GM12878 (cell line): ENCODE measurements at regions of chr9 and their contacts with region 1.

Region 1: GRCh38 chr9:34869390-34869789 is 88.7 kb upstream of the PHF24 start:
- DNase-seq: no peak
- ATAC-seq: no peak
- H3K4me3 ChIP-seq: no peak overlapping the region
- H3K27ac ChIP-seq: no peak overlapping the region
- H3K4me1 ChIP-seq: no peaks in the 10 kb centered on the region
- H3K27me3 ChIP-seq: no peaks in the 10 kb centered on the region
- CTCF ChIP-seq: peak; percentile 12 to 21 (median 15); a peak in 3 of 6 replicates
- EP300 ChIP-seq: no peak
- POLR2A ChIP-seq: no peak
- RAD21 ChIP-seq: 0 out of 2 replicates have a peak, but pooled peaks have one; percentile 22

Region 2: GRCh38 chr9:34479431-34479866 is 389.9 kb before region 1 on chr9:
- CTCF ChIA-PET with region 1: no interaction called
- POLR2A ChIA-PET with region 1: no interaction called
- RAD21 ChIA-PET with region 1: no interaction called
- SMC1A ChIA-PET with region 1: no interaction called
- in situ Hi-C with region 1: no loop called
- intact Hi-C with region 1: no loop called
- DNase-seq: no peak
- ATAC-seq: no peak
- H3K4me3 ChIP-seq: no peak overlapping the region
- H3K27ac ChIP-seq: no peak overlapping the region
- H3K4me1 ChIP-seq: no peaks in the 10 kb centered on the region
- H3K27me3 ChIP-seq: peaks cover 0 to 2% of the 10 kb centered on the region in 2 experiments; a peak in 2 of 4 replicates
- CTCF ChIP-seq: no peak
- EP300 ChIP-seq: no peak
- POLR2A ChIP-seq: no peak
- RAD21 ChIP-seq: no peak

Region 3: DNA sequence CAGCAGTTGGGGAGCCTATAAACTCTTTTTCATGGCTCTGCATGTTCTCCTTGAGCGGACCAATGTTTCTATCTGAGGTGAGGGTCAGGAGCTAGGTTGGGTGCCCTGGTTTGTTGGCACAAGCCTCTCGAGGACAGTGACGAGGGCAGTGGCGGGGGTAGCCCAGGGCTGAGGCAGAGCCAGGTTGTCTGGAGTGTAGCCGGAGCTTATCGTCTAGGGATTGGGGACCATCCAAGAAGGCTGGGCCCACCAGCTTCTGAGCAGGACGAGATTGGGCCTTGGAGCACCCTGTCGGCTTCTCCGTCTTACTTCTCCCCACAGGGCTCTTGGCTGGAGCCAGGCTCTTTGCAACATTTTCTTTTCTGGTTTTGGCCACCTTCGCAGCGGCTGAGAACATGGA is 146.2 kb before region 1 on chr9:
- CTCF ChIA-PET with region 1: no interaction called
- POLR2A ChIA-PET with region 1: no interaction called
- RAD21 ChIA-PET with region 1: no interaction called
- SMC1A ChIA-PET with region 1: no interaction called
- in situ Hi-C with region 1: no loop called
- intact Hi-C with region 1: no loop called
- DNase-seq: no peak
- ATAC-seq: no peak
- H3K4me3 ChIP-seq: no peak overlapping the region
- H3K27ac ChIP-seq: no peak overlapping the region
- H3K4me1 ChIP-seq: no peaks in the 10 kb centered on the region
- H3K27me3 ChIP-seq: no peaks in the 10 kb centered on the region; a peak in 1 of 4 replicates
- CTCF ChIP-seq: no peak
- EP300 ChIP-seq: no peak
- POLR2A ChIP-seq: no peak
- RAD21 ChIP-seq: no peak

Region 4: GRCh38 chr9:34759432-34760134 is 109.8 kb before region 1 on chr9:
- CTCF ChIA-PET with region 1: interaction called, 3 read pairs
- POLR2A ChIA-PET with region 1: no interaction called
- RAD21 ChIA-PET with region 1: no interaction called
- SMC1A ChIA-PET with region 1: no interaction called
- in situ Hi-C with region 1: no loop called
- intact Hi-C with region 1: loop called (anchors 1 kb)
- DNase-seq: no peak
- ATAC-seq: no peak
- H3K4me3 ChIP-seq: no peak overlapping the region
- H3K27ac ChIP-seq: no peak overlapping the region
- H3K4me1 ChIP-seq: no peaks in the 10 kb centered on the region
- H3K27me3 ChIP-seq: no peaks in the 10 kb centered on the region; a peak in 1 of 4 replicates
- CTCF ChIP-seq: no peak
- EP300 ChIP-seq: no peak
- POLR2A ChIP-seq: no peak
- RAD21 ChIP-seq: no peak

Region 5: GRCh38 chr9:34809504-34810186 is 59.7 kb before region 1 on chr9:
- CTCF ChIA-PET with region 1: no interaction called
- POLR2A ChIA-PET with region 1: no interaction called
- RAD21 ChIA-PET with region 1: no interaction called
- SMC1A ChIA-PET with region 1: no interaction called
- in situ Hi-C with region 1: no loop called
- intact Hi-C with region 1: loop called (anchors 10 kb)
- DNase-seq: no peak
- ATAC-seq: no peak
- H3K4me3 ChIP-seq: no peak overlapping the region
- H3K27ac ChIP-seq: no peak overlapping the region
- H3K4me1 ChIP-seq: no peaks in the 10 kb centered on the region
- H3K27me3 ChIP-seq: no peaks in the 10 kb centered on the region; a peak in 2 of 4 replicates
- CTCF ChIP-seq: no peak
- EP300 ChIP-seq: no peak
- POLR2A ChIP-seq: no peak
- RAD21 ChIP-seq: no peak

Region 6: GRCh38 chr9:35364817-35365585 is 495.6 kb after region 1 on chr9:
- CTCF ChIA-PET with region 1: no interaction called
- POLR2A ChIA-PET with region 1: no interaction called
- RAD21 ChIA-PET with region 1: no interaction called
- SMC1A ChIA-PET with region 1: no interaction called
- in situ Hi-C with region 1: no loop called
- intact Hi-C with region 1: loop called (anchors 5 kb)
- DNase-seq: no peak
- ATAC-seq: no peak
- H3K4me3 ChIP-seq: no peak overlapping the region
- H3K27ac ChIP-seq: no peak overlapping the region
- H3K4me1 ChIP-seq: no peaks in the 10 kb centered on the region
- H3K27me3 ChIP-seq: no peaks in the 10 kb centered on the region
- CTCF ChIP-seq: no peak
- EP300 ChIP-seq: no peak
- POLR2A ChIP-seq: no peak
- RAD21 ChIP-seq: no peak

Region 7: GRCh38 chr9:35756275-35757225 is 887.2 kb after region 1 on chr9:
- CTCF ChIA-PET with region 1: no interaction called
- POLR2A ChIA-PET with region 1: no interaction called
- RAD21 ChIA-PET with region 1: no interaction called
- SMC1A ChIA-PET with region 1: no interaction called
- in situ Hi-C with region 1: no loop called
- intact Hi-C with region 1: no loop called
- DNase-seq: no peak
- ATAC-seq: peak; percentile 86
- H3K4me3 ChIP-seq: peak overlapping the region; percentile 87
- H3K27ac ChIP-seq: peak overlapping the region; percentile 98
- H3K4me1 ChIP-seq: peaks cover 22% of the 10 kb centered on the region
- H3K27me3 ChIP-seq: no peaks in the 10 kb centered on the region
- CTCF ChIP-seq: peak; percentile 76 to 94 (median 82)
- EP300 ChIP-seq: no peak
- POLR2A ChIP-seq: no peak; the same call in none of the 2 replicates
- RAD21 ChIP-seq: peak; percentile 59